Right ventricle myocardium superior (tissue), 1 donor: ENCODE measurements at regions of chr6 and their contacts with region 1.

Region 1: GRCh38 chr6:73675466-73676098 is 20.4 kb upstream of the CD109 start:
- DNase-seq: peak; percentile 58
- ATAC-seq: peak; percentile 96

Region 2: DNA sequence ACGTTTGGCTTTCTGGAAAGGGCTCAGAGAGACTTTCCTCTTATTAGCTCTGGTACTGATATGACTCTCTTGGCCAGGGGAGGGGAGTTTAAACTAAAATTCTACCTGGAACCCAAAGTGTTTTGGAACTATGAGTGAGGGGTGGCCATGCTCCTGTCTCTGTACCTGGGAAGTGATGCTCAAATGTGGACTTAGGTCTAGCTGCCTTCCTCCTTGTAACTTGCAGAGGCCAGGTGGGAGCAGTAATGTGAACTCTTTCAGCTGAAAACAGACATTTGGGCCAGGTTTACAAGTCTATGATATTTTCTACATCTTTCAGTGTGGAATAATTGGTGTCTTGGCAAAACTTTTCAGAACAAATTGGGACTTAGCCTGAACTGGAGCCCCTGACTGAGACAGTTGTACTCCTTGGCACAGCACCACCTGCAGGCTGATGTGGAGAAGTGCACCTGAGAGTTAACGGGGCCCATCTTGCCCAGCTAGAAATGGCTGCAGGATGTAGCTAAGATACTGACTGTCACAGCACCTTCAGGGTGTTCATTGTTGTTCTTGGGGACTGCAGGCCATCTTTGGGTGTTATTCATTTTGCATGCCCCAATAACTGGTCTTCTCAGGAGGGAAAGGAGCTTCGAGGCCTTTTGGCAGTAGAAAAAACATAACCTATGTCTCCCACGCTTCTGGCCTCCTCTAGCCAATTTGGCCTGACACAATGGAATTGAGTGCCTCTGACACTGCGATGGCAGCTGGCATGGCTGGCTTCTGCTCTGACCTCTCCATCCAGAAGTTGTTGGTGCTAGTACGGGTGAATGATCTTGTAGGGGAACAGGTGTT is 57.5 kb after region 1 on chr6:
- intact Hi-C with region 1: loop called (anchors 2 kb)
- DNase-seq: peak; percentile 58
- ATAC-seq: peak; percentile 95